ENCODE measurements at regions of chr6 and their contacts with region 1.

Region 1: GRCh38 chr6:36985808-36986703 is at the start of gene MTCH1:
- DNase-seq: peak; percentile 85
- ATAC-seq: peak; percentile 82
- H3K4me3 Mint-ChIP-seq: peak within 1 kb of the TSS; percentile 99
- H3K27ac Mint-ChIP-seq: peak within 1 kb of the TSS; percentile 95
- H3K4me1 Mint-ChIP-seq: peaks cover 17% of the 10 kb centered on the region
- H3K27me3 Mint-ChIP-seq: peaks cover 1% of the 10 kb centered on the region
- CTCF ChIP-seq: no peak
- total RNA-seq, gene MTCH1: 96.5 to 100 TPM

Region 2: DNA sequence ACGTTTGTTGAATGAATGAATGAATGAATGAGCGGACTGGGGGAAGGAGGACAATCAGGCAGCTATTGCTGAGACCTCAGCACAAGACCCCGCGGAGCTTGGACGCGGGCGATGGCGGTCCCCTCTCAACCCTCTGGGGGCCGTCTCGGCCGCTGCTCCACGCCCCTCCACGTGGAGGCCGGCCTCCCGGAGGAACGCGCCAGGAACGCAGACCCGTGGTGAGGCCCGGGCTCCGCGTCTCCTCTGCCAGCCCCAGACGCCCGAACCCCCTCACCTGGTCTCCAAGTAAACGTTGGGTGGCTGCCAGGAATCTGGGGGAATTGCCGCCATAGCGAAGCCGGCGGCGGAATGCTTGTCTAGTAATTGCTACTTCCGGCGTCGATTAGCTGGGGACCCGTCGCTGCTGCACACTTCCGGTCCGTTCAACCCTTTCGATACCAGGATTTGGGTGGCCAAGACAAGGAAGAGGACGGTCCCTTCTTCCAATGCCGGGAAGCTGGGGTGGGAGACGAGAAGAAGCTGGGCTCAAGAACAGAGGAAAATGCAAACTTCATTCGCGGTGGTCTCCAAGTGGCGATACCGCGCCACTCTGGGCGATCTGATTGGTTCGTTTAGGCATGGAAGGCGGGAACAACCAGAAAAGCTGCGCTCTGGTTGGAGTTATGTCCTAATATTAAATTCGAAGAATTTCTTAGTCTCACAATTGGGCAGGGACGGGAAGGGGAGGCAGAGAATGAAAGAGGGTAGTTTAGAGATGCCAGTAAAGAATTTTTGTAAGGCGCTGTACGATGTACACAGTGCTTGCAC is 111.4 kb before region 1 on chr6 and contains the start of gene PPIL1:
- CTCF ChIA-PET with region 1: interaction called, 11 read pairs
- POLR2A ChIA-PET with region 1: interaction called, 10 read pairs
- intact Hi-C with region 1: no loop called
- DNase-seq: peak; percentile 88
- ATAC-seq: peak; percentile 91
- H3K4me3 Mint-ChIP-seq: peak within 1 kb of the TSS; percentile 99
- H3K27ac Mint-ChIP-seq: peak within 1 kb of the TSS; percentile 100
- H3K4me1 Mint-ChIP-seq: peaks cover 42% of the 10 kb centered on the region
- H3K27me3 Mint-ChIP-seq: peaks cover 5% of the 10 kb centered on the region
- CTCF ChIP-seq: no peak
- total RNA-seq, gene PPIL1: 34.5 to 35.6 TPM

Region 3: GRCh38 chr6:37353761-37354525 is 367.9 kb after region 1 on chr6 and contains the start of gene RNF8:
- CTCF ChIA-PET with region 1: no interaction called
- POLR2A ChIA-PET with region 1: no interaction called
- intact Hi-C with region 1: no loop called
- DNase-seq: peak; percentile 96
- ATAC-seq: peak; percentile 99
- H3K4me3 Mint-ChIP-seq: peak within 1 kb of the TSS; percentile 90
- H3K27ac Mint-ChIP-seq: peak within 1 kb of the TSS; percentile 89
- H3K4me1 Mint-ChIP-seq: peaks cover 26% of the 10 kb centered on the region
- H3K27me3 Mint-ChIP-seq: no peaks in the 10 kb centered on the region
- CTCF ChIP-seq: no peak
- total RNA-seq, gene RNF8: 19.8 to 21.1 TPM

Measured in activated CD8-positive, alpha-beta T cell treated with anti-CD3 and anti-CD28 coated beads for 36 hours (primary cell).